ENCODE measurements at regions of chr3 and their contacts with region 1.

Region 1: GRCh38 chr3:73056014-73056844 is 5.2 kb upstream of the EBLN2 start:
- DNase-seq: no peak
- H3K4me3 ChIP-seq: no peak overlapping the region
- H3K27ac ChIP-seq: no peak overlapping the region
- H3K4me1 ChIP-seq: peaks cover 0 to 13% of the 10 kb centered on the region in 2 donors
- H3K27me3 ChIP-seq: no peaks in the 10 kb centered on the region
- CTCF ChIP-seq: peak in 5 of 6 experiments; percentile 36 to 75 (median 60)
- POLR2A ChIP-seq: no peak

Region 2: GRCh38 chr3:72938471-72939265 is 117.6 kb before region 1 on chr3:
- intact Hi-C with region 1: loop called (anchors 5 kb)
- DNase-seq: peak in 1 of 2 donors; percentile 32
- H3K4me3 ChIP-seq: no peak overlapping the region
- H3K27ac ChIP-seq: no peak overlapping the region
- H3K4me1 ChIP-seq: peaks cover 0 to 7% of the 10 kb centered on the region in 2 donors
- H3K27me3 ChIP-seq: no peaks in the 10 kb centered on the region
- CTCF ChIP-seq: peak; percentile 47 to 93 (median 54)
- POLR2A ChIP-seq: no peak

Region 3: GRCh38 chr3:72993391-72993790 is 62.8 kb before region 1 on chr3:
- intact Hi-C with region 1: no loop called
- DNase-seq: no peak
- H3K4me3 ChIP-seq: no peak overlapping the region
- H3K27ac ChIP-seq: no peak overlapping the region
- H3K4me1 ChIP-seq: peaks cover 7 to 10% of the 10 kb centered on the region in 2 donors
- H3K27me3 ChIP-seq: no peaks in the 10 kb centered on the region
- CTCF ChIP-seq: no peak
- POLR2A ChIP-seq: no peak

Region 4: DNA sequence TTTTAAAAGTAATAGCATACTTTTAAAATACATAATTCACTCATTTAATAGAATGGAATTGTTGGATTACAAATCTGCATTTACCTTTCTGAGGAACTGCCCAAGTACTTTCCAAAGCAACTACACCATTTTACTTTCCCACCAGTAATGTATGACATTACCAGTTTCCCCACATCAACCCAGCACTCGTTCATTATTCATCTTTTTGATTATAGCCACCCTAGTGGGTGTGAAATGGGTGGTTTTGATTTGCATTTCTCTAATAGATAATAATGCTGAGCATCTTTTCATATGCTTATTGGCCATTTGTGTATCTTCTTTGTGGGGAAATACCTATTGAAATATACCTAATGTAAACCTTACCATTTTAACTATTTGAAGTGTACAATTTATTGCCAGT is 12.8 kb before region 1 on chr3:
- intact Hi-C with region 1: loop called (anchors 2 kb)
- DNase-seq: no peak
- H3K4me3 ChIP-seq: no peak overlapping the region
- H3K27ac ChIP-seq: no peak overlapping the region
- H3K4me1 ChIP-seq: peaks cover 18 to 19% of the 10 kb centered on the region in 2 donors
- H3K27me3 ChIP-seq: no peaks in the 10 kb centered on the region
- CTCF ChIP-seq: no peak
- POLR2A ChIP-seq: no peak